Right ventricle myocardium inferior (tissue), 1 donor: ENCODE measurements at regions of chr19 and their contacts with region 1.

Region 1: DNA sequence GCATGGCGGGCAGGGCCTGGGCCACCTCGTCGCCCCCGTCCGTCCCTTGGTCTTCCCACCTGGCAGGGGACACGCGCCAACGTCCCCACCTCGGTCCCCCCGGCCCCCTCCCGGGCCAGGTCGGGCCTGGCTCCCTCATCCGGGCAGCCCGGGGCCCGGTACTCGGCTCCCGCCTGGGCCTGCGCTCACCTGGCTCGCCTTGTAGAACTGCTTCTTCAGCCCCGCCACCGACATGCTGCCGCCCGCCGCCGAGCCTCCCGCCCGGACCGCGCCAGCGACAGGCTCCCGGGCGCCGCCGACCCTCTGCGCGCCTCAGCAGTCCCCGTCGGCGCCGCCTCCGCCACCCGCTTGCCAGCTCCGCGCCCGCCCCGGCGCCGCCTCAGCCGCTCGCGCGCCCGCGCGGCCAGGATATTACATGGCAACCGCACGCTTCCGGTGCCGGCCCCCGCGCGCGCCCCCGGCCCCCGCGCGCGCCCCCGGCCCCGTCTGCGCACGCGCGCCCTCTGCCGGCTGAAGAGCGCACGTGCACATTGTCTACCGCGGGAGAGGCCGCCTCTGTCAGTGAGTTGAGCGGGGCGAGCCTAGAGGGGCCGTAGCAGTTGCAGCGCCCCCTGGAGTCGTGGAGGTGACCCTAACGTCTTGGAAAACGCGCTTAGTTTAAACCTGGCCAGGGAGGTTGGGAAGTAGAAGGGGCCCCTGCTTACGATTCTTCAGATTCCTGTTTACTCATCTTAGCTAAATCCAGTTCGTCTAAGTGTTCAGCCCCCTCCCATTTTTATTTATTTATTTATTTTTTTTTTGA is at the start of gene SH3GL1:
- DNase-seq: peak; percentile 94
- ATAC-seq: peak; percentile 69
- total RNA-seq, gene SH3GL1: 22.0 TPM

Region 2: DNA sequence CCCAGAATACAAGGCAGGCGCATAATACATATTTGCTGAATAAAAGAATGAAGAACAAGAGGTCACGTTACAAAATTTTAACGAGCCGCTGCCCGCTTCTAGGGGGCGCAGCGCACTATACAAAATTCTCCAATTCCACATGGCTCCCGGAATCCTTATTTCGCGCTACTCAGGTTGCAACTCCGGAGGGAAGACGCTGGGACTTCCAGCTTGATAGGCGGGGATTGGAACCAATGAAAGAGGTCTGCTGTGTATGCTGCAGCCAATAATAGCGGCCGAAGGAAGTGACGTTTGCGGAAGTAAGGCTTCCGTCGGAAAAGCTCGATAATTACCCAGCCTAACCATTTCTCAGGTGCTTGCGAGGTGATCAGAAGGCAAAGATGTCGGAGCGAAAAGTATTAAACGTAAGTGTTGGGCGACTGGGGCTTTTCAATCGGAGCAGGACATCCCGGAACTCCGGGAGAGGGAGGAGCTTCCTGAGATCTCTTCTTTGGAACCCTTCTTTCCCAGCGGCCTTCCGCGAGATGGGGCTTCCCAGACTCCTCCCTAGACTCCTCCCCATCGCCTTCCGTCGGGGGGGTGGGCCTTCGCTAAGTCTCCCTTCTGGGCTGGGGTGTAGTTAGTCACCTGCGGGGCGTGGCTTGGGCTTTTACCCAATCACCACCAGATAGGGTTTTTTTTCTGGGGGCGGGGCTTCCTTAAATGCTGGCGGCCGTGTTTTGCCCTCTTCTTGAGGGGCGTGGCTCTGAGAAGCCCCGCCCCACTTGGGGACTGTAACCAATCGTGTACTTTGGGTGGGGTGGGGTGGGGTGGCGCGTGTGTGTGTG is 153.4 kb before region 1 on chr19 and contains the start of gene YJU2:
- intact Hi-C with region 1: loop called (anchors 1 kb)
- DNase-seq: peak; percentile 99
- ATAC-seq: peak; percentile 98
- total RNA-seq, gene YJU2: 9.2 TPM

Region 3: GRCh38 chr19:4328243-4328990 is 71.9 kb before region 1 on chr19:
- intact Hi-C with region 1: loop called (anchors 1 kb)
- DNase-seq: peak; percentile 96
- ATAC-seq: peak; percentile 94

Region 4: GRCh38 chr19:4342615-4343369 is 57.5 kb before region 1 on chr19:
- intact Hi-C with region 1: loop called (anchors 1 kb)
- DNase-seq: peak; percentile 98
- ATAC-seq: peak; percentile 97

Region 5: GRCh38 chr19:4375164-4376027 is 24.9 kb before region 1 on chr19:
- intact Hi-C with region 1: loop called (anchors 2 kb)
- DNase-seq: no peak
- ATAC-seq: peak; percentile 1

Region 6: DNA sequence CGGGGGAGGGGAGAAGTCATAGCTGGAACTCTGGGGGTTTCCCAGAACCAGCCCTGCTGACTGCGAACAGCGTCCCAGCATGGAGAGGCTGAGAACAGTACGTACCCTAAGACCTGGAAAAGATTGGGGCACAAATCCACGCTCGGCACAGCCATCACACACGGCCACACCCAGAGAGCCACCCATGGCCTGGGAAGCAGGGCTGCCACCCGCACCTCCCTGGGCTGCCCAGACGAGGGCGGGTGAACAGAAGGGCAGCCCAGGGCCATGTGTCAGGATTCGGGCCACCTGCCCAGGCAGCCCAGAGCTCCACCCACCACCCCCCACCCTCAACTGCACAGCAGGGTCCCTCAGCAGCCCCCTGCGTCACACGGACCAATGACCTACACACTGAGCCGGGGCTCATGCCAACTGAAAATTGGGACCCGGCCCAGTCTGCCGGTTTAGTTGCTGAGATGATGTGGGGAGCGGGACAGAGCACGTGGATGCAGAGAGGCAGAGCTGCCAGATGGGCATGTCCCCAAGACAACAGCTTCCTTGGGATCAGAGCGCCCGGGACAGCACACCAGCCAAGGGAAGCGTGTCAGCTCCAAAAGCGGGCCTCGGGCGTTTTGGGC is 48.8 kb after region 1 on chr19:
- intact Hi-C with region 1: loop called (anchors 1 kb)
- DNase-seq: peak; percentile 90
- ATAC-seq: peak; percentile 87

Region 7: DNA sequence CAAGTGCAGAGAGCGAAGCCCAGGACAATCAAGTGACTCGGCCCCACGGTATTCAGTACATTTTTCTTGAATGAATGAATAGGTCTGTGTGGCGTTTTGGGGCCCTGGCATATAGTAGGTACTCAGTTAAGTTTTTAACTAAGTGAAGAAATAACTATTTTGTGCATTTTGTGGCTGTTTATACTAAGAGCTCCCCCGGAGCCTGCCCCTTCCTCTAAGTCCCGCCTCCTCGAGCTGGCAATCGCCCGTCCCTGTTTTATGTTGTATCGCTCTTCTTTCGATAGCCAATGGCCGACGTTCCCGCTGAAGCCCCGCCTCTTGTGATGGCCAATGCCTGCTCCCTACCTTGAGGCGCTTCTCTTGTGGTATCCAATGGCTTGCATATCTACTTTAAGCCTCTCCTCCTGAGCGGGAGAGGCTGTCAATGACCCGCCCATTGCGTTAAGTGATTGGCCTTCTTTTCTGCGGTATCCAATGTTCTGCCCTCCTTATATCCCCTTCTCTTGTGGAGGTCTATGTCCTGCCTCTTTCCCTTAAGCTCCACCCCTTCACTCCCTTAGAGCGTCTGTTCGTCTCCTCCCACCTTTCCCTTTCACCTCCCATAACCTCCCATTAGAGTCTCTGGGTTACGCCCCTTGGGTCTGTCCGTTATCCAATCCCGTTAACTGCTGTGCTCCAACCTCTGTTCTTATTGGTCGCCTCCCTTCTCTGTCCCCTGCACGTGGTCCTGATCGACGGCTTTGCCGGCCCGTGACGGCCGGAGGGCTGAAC is 71.3 kb after region 1 on chr19:
- intact Hi-C with region 1: loop called (anchors 5 kb)
- DNase-seq: peak; percentile 98
- ATAC-seq: peak; percentile 97